ENCODE measurements at regions of chr5 and their contacts with region 1.

Region 1: GRCh38 chr5:151051066-151051930 is 29.5 kb downstream of the TNIP1 start:
- DNase-seq: peak; percentile 68
- H3K4me3 ChIP-seq: no peak overlapping the region
- H3K27ac ChIP-seq: no peak overlapping the region
- H3K4me1 ChIP-seq: no peaks in the 10 kb centered on the region
- H3K27me3 ChIP-seq: no peaks in the 10 kb centered on the region
- CTCF ChIP-seq: peak; percentile 54 to 88 (median 79)
- POLR2A ChIP-seq: no peak

Region 2: DNA sequence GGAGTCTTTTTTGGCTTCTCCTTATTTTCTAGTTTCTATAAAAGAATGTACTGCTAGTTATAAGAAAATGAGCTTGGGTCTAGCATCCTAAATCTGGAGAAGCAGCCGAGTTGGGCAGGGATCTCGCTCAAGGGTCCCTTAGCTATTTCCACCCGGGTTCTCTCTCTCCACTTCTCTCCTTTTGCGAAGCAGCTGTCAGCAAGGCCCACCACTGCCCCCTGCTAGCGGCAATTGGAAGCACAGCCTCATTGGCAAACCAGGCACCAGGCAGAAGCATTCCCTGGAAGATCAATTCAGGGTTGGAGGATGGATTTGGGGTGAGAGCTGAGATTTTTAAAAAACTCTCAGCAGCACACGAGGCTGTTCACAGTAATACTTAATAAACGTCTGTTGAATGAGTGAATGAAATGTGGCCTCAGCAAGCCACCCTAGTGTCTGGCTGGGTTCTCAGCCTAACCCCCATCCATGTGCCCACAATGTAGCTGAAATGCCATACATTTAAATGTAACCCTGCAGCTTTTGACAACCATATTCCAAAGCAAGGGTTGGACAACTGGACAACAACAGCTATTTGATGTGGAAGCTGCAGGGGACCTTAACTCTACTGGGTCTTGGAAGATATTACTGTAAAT is 64.1 kb after region 1 on chr5:
- intact Hi-C with region 1: loop called (anchors 1 kb)
- DNase-seq: peak; percentile 61
- H3K4me3 ChIP-seq: no peak overlapping the region
- H3K27ac ChIP-seq: no peak overlapping the region
- H3K4me1 ChIP-seq: no peaks in the 10 kb centered on the region
- H3K27me3 ChIP-seq: no peaks in the 10 kb centered on the region
- CTCF ChIP-seq: peak; percentile 72 to 93 (median 82)
- POLR2A ChIP-seq: no peak

Region 3: GRCh38 chr5:151509231-151509630 is 457.9 kb after region 1 on chr5:
- intact Hi-C with region 1: no loop called
- DNase-seq: no peak
- H3K4me3 ChIP-seq: no peak overlapping the region
- H3K27ac ChIP-seq: no peak overlapping the region
- H3K4me1 ChIP-seq: no peaks in the 10 kb centered on the region
- H3K27me3 ChIP-seq: no peaks in the 10 kb centered on the region
- CTCF ChIP-seq: no peak
- POLR2A ChIP-seq: no peak

Measured in prostate gland (tissue), 2 donors.